ENCODE measurements at regions of chr1 and their contacts with region 1.

Region 1: GRCh38 chr1:50750021-50750619 is 209.9 kb downstream of the FAF1 start:
- DNase-seq: peak in 1 of 9 experiments; percentile 22
- ATAC-seq: no peak
- H3K4me3 ChIP-seq: no peak overlapping the region
- H3K4me3 Mint-ChIP-seq: no peak overlapping the region
- H3K27ac ChIP-seq: no peak overlapping the region
- H3K27ac Mint-ChIP-seq: no peak overlapping the region
- H3K4me1 ChIP-seq: no peaks in the 10 kb centered on the region
- H3K4me1 Mint-ChIP-seq: no peaks in the 10 kb centered on the region
- H3K27me3 ChIP-seq: no peaks in the 10 kb centered on the region
- H3K27me3 Mint-ChIP-seq: no peaks in the 10 kb centered on the region
- CTCF ChIP-seq: no peak

Region 2: DNA sequence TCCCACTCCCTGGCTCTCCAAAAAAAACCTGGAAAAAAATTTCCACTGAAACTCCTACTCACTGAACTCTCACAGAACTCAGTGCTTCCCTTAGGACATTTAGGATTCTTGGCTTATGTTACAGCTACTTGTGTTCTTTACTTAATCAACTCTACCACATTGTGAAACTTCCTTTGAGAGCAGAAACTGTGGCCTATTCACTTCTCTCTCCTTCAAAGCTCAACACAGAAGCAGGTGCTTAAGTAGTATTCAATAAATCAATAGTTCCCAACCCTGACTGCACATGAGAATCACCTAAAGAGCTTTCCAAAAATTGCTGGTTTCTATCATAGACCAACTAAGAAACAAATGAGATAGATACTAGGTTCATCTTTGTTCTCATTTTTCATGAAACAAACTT is 259.0 kb before region 1 on chr1:
- CTCF ChIA-PET with region 1: no interaction called
- POLR2A ChIA-PET with region 1: no interaction called
- intact Hi-C with region 1: no loop called
- DNase-seq: no peak
- ATAC-seq: no peak
- H3K4me3 ChIP-seq: no peak overlapping the region
- H3K4me3 Mint-ChIP-seq: no peak overlapping the region
- H3K27ac ChIP-seq: no peak overlapping the region
- H3K27ac Mint-ChIP-seq: peak overlapping the region; percentile 65
- H3K4me1 ChIP-seq: no peaks in the 10 kb centered on the region
- H3K4me1 Mint-ChIP-seq: peaks cover 7% of the 10 kb centered on the region
- H3K27me3 ChIP-seq: no peaks in the 10 kb centered on the region
- H3K27me3 Mint-ChIP-seq: no peaks in the 10 kb centered on the region
- CTCF ChIP-seq: no peak

Region 3: DNA sequence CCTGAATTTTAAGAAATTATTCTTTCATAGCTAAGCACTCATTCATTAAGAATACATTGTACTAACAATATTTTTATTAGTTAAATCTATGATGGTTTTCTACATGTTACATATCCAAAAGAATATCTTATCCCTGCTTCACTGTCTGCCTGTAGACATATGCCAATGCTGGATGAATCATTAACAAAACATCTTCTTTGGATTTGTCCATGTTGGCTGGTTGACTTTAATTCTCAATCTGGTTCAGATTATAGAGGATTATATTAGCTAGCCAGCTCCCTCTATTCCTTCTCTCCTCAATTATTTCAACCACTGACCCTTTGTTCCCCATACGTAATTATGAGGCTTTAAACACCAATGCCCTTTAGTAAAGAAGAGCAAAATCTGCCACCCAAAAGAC is 188.0 kb before region 1 on chr1:
- CTCF ChIA-PET with region 1: no interaction called
- POLR2A ChIA-PET with region 1: no interaction called
- intact Hi-C with region 1: no loop called
- DNase-seq: no peak
- ATAC-seq: no peak
- H3K4me3 ChIP-seq: no peak overlapping the region
- H3K4me3 Mint-ChIP-seq: no peak overlapping the region
- H3K27ac ChIP-seq: no peak overlapping the region
- H3K27ac Mint-ChIP-seq: no peak overlapping the region
- H3K4me1 ChIP-seq: no peaks in the 10 kb centered on the region
- H3K4me1 Mint-ChIP-seq: no peaks in the 10 kb centered on the region
- H3K27me3 ChIP-seq: no peaks in the 10 kb centered on the region
- H3K27me3 Mint-ChIP-seq: no peaks in the 10 kb centered on the region
- CTCF ChIP-seq: no peak

Region 4: DNA sequence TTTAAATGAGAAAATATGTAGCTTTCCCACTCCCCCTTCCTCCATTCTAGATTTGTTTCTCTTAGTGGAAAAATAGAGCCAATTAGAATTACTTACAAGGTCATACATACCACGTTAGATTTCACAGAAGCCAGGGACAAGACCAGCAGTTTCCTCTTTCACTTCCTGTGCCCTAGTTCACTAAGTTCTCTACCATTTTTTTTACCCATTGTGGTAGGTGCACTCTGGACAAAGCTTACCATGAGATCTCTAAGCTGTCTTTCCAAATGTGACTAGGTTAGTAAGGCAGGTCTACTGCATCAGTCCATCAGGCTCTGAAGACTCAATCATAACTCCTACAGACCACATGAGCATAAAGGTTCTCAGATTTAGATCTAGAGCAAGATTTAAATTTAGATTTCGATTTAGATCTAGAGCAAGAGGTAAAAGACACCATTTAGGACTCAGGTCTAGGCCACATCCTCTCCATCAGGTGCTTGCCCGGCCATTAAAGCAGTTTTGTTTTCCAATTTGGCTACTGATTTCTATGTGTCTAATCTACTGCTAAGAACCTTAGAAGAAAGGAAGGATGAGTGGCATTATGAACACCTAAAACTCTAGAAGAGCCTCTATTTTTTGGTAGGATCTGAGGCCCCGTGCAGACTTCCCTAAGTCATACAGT is 25.4 kb before region 1 on chr1:
- CTCF ChIA-PET with region 1: no interaction called
- POLR2A ChIA-PET with region 1: no interaction called
- intact Hi-C with region 1: no loop called
- DNase-seq: peak in 2 of 9 experiments; percentile 17 to 25
- ATAC-seq: no peak
- H3K4me3 ChIP-seq: no peak overlapping the region
- H3K4me3 Mint-ChIP-seq: peak overlapping the region; percentile 16
- H3K27ac ChIP-seq: peak overlapping the region in 1 of 2 experiments; percentile 61
- H3K27ac Mint-ChIP-seq: peak overlapping the region; percentile 83
- H3K4me1 ChIP-seq: peaks cover 7% of the 10 kb centered on the region
- H3K4me1 Mint-ChIP-seq: peaks cover 29% of the 10 kb centered on the region
- H3K27me3 ChIP-seq: no peaks in the 10 kb centered on the region
- H3K27me3 Mint-ChIP-seq: no peaks in the 10 kb centered on the region
- CTCF ChIP-seq: no peak

Region 5: DNA sequence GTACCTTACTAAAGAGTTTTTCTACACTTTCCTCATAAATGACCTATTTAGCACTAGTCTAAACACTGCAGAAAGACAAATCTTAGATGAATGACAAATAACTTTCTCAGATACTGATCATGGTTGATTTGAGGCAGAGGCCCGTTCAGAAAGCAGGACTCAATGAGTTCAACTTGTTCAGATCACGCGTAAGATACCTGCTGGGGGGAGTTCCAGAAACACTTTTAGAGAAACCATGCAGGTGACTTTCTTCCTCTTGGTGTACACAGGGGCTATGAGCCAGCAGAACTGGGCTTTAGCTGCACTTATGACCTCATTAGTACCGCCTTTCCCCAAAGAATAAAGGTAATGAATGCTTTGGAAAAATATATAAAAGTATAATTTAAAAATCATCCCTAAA is 619.1 kb after region 1 on chr1:
- CTCF ChIA-PET with region 1: no interaction called
- POLR2A ChIA-PET with region 1: no interaction called
- intact Hi-C with region 1: loop called in 1 of 2 experiments (anchors 5 kb)
- DNase-seq: no peak
- ATAC-seq: no peak
- H3K4me3 ChIP-seq: no peak overlapping the region
- H3K4me3 Mint-ChIP-seq: no peak overlapping the region
- H3K27ac ChIP-seq: no peak overlapping the region
- H3K27ac Mint-ChIP-seq: no peak overlapping the region
- H3K4me1 ChIP-seq: no peaks in the 10 kb centered on the region
- H3K4me1 Mint-ChIP-seq: no peaks in the 10 kb centered on the region
- H3K27me3 ChIP-seq: no peaks in the 10 kb centered on the region
- H3K27me3 Mint-ChIP-seq: no peaks in the 10 kb centered on the region
- CTCF ChIP-seq: no peak

Measured in CD8-positive, alpha-beta T cell (primary cell).